BJ (cell line): ENCODE measurements at regions of chr7 and their contacts with region 1.

Region 1: DNA sequence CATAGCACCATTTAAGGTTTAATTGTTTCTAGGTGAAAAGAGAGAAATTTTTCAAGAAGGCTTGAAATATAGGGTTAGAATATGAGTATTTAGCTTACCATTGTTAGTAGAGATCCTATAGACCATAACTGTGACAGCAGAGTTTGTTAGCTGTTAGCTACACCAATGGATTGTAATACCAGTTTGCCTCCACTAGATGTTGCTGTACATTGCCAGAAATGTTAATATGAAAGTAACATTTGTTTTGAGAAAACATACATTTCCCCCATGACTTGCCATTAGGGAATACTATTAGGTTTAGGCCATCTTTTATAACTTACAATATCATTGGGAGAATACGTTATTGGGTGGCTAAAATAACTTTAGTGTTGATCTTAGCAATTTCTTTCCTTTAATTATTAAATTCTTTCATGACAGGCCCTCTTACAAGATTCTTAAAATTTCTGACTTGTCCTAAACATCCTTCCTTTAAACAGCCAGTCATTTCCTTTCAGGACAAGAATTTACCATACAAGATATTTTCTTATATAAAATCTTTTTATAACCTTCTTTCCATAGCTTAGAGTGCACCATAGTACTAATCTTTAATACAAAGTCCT is 39.5 kb downstream of the ZNF117 start:
- DNase-seq: no peak
- H3K4me3 ChIP-seq: no peak overlapping the region
- H3K27me3 ChIP-seq: peaks cover 11% of the 10 kb centered on the region
- CTCF ChIP-seq: peak; percentile 76

Region 2: DNA sequence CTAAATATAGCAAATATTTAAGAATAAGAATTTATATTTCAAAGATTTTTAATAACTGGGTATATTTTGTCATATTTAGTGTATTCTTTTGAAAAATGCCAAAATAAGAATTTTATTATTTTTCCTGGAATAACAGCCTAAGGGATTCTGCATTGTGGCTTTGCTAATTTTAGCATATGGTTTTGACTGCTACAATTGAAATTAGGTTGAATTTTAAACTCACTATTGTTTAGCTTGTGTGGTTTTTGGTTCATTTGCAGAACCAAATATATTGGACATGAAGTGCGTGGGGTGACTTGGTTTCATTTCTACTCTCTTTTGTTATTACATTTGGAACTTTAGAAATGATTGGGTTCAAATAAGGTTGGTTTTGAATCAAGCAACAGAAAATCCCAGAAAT is 12.8 kb before region 1 on chr7:
- CTCF ChIA-PET with region 1: interaction called, 10 read pairs
- POLR2A ChIA-PET with region 1: no interaction called
- DNase-seq: no peak
- H3K4me3 ChIP-seq: no peak overlapping the region
- H3K27me3 ChIP-seq: no peaks in the 10 kb centered on the region
- CTCF ChIP-seq: no peak

Region 3: GRCh38 chr7:65307651-65308299 is 356.4 kb after region 1 on chr7:
- CTCF ChIA-PET with region 1: interaction called, 19 read pairs
- POLR2A ChIA-PET with region 1: no interaction called
- DNase-seq: no peak
- H3K4me3 ChIP-seq: no peak overlapping the region
- H3K27me3 ChIP-seq: no peaks in the 10 kb centered on the region; the same call in 1 of the 2 replicates
- CTCF ChIP-seq: peak; percentile 86